ENCODE measurements at regions of chr15 and their contacts with region 1.

Region 1: DNA sequence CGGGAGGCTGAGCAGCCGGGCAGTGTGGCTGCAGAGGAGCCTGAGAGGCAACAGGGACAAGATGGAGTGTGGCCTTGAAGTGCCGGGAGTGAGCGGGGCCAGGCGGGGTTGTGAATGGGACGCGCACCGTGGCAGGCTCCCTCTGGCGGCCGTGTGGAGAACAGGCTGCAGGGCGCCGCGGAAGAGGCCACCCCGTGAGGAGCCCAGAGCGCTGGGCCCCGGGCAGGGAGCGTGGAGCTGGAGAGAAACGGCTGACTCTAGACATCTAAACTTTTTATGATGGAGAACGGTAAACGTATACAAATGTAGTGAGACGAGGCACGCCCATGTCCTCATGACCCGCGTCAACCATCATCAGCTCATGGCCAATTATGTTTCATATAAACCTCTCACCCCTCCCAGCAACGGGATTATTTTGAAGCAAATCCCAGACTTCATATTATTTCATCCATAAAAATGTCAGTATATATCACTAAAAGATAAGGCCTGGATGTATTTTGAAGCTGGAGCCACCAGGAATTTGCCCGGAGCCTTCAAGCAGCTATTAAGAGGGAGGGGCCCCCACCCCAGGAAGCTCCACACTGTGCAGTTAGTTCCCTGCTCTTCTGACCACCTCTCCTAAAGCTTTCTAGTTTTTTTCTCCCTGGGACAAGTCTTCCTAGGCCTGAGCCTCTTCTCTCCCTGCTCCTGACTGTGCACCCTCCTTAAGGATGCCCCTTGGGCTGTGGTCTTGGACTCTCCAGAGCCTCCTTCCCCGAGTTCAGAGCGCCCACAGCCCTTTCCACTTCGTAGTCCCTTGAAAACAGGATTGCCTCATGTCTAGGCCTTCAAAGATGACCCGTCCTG is 149.4 kb downstream of the SMAD6 start:
- DNase-seq: peak; percentile 89 to 96 (median 96)
- ATAC-seq: peak; percentile 83 to 88
- H3K4me3 ChIP-seq: no peak overlapping the region
- H3K27ac ChIP-seq: peak overlapping the region; percentile 53
- H3K4me1 ChIP-seq: peaks cover 14% of the 10 kb centered on the region
- H3K27me3 ChIP-seq: no peaks in the 10 kb centered on the region

Region 2: GRCh38 chr15:66603301-66604179 is 247.9 kb before region 1 on chr15:
- intact Hi-C with region 1: loop called (anchors 2 to 5 kb)
- DNase-seq: peak; percentile 75 to 93 (median 90)
- ATAC-seq: peak; percentile 89 to 90
- H3K4me3 ChIP-seq: no peak overlapping the region
- H3K27ac ChIP-seq: no peak overlapping the region
- H3K4me1 ChIP-seq: no peaks in the 10 kb centered on the region
- H3K27me3 ChIP-seq: no peaks in the 10 kb centered on the region

Region 3: DNA sequence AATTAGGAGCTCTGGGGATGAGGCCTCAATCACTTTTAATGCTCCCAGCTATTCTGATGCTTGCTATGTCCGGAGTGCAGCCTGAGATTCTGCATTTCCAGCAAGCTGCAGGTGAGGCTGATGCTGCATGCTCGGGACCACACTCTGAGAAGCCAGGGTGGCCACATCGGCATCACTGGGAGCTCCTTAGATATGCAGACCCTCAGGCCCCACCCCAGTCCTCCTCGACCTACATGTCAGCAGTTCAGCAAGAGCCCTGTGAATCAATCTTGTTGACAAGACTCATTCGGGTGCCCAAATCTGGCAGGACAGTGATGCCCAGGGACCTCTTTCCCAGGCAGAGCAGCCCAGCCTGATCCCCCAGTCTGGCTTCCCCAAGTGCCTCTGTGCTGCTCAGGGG is 241.6 kb before region 1 on chr15:
- intact Hi-C with region 1: loop called in 2 of 4 experiments (anchors 2 to 5 kb)
- DNase-seq: no peak
- ATAC-seq: no peak
- H3K4me3 ChIP-seq: no peak overlapping the region
- H3K27ac ChIP-seq: no peak overlapping the region
- H3K4me1 ChIP-seq: peaks cover 7% of the 10 kb centered on the region
- H3K27me3 ChIP-seq: no peaks in the 10 kb centered on the region

Region 4: DNA sequence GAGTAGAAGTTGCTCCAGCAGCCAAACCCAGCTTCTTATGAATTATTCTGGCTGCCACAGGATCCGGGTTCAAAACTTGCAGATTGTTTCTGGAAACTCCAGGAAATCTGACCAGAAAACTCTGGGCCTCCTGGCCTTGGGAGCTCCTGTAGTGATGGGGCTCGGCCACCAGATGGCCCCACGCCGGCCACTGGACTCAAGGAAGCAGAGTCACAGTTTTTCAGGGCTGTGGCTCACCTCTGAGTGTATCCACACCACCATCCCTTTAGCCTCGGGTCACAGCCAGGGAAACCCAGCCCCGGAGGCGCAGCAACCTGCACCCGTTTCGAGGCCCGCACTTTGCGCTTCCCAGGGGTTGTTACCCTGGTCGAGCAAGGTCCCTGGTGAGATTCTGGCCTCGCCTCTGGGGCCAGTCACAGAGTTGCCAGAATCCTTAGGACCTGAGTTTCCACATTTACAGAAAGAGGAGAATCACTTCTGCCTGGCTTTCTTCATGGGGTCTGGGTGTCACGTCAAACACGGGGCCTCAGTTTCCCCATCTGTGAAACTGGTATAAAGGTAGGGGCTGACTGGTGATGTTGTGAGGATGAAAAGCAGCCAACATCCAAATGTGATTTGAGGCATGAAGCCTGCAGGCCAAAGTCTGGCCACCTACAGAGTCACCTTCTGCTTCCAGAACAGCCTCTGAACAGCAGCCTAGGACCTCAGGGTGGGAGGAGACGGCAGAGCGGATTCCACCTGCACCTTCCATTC is 232.1 kb before region 1 on chr15:
- intact Hi-C with region 1: loop called in 1 of 4 experiments (anchors 5 kb)
- DNase-seq: peak; percentile 79 to 93 (median 93)
- ATAC-seq: peak; percentile 53
- H3K4me3 ChIP-seq: no peak overlapping the region
- H3K27ac ChIP-seq: peak overlapping the region; percentile 69
- H3K4me1 ChIP-seq: peaks cover 8% of the 10 kb centered on the region
- H3K27me3 ChIP-seq: no peaks in the 10 kb centered on the region

Region 5: DNA sequence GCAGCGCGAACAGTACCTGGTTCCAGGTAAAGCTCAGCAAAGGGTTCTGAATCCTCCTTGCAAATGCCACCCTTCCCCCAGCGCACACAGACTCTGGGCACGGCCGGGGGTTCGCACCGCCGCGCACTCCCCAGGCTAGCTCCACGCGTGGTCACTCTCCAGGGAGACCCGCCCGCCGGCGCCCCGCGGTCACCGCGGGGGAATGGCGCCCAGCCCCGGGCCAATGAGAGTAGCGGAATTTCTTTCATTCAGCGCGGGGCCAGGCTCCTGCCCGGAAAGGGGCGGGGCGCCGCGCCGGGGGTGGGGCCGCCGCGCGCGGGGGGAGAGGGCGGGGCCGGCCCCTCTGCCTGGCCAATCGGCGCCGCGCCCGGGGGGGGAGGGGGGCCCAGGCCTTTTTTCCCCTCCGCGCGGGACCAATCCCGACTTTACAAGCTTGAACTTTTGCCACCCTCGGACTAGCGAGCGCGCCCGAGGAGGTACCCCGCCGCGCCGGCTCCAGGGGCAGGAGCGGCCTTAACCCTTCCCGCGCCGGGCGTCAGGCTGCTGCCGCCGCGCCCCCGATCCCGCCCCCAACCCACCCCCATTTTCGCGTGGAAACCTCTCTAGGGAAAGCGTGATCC is 150.5 kb before region 1 on chr15:
- intact Hi-C with region 1: loop called (anchors 5 kb)
- DNase-seq: peak; percentile 97 to 99 (median 99)
- ATAC-seq: peak; percentile 76 to 78
- H3K4me3 ChIP-seq: peak overlapping the region; percentile 95
- H3K27ac ChIP-seq: peak overlapping the region; percentile 99
- H3K4me1 ChIP-seq: peaks cover 4% of the 10 kb centered on the region
- H3K27me3 ChIP-seq: no peaks in the 10 kb centered on the region

Region 6: DNA sequence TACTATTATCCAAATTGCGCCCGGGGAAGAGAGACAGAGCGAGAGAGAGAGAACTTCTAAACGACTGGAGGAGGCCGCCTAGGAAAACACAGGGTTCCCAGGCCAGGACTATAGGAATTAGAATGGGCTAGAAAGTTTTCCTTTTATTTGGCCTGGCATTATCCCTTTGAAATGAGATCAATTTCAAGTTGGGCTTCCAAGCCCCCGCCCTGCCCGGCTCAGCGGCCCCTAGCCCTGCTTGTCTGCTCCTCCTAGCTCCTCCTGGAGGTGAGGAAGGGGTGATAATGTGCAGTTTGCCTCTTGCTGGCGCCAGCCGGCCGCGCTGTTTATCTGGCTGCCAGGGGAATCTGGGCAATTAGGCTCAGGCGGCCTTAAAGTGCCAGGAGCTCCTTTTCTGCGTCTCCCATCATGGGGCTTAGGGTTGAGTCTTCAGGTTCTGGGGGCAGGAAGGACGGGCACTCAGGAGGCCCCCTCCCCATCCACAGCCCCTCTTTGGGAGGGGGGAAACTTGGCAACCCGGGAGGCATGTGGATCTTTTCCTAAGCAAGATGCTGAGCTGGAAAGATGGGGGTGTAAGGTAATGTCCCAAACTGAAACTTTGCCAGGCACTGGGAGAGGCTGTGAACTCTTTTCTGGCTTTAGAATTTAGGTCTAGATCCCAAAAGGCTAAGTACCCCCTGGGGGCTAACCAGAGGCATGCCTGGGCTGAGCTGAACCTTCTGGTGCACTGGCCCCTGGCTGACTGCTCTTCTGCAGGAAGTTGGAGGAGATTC is 144.0 kb before region 1 on chr15:
- intact Hi-C with region 1: loop called (anchors 5 kb)
- DNase-seq: peak; percentile 53 to 86 (median 82)
- ATAC-seq: peak; percentile 27 to 42
- H3K4me3 ChIP-seq: peak overlapping the region; percentile 95
- H3K27ac ChIP-seq: peak overlapping the region; percentile 77
- H3K4me1 ChIP-seq: peaks cover 18% of the 10 kb centered on the region
- H3K27me3 ChIP-seq: no peaks in the 10 kb centered on the region

Region 7: GRCh38 chr15:66740802-66741201 is 110.6 kb before region 1 on chr15:
- intact Hi-C with region 1: no loop called
- DNase-seq: peak; percentile 76 to 92 (median 91)
- ATAC-seq: peak; percentile 20 to 30
- H3K4me3 ChIP-seq: no peak overlapping the region
- H3K27ac ChIP-seq: peak overlapping the region; percentile 25
- H3K4me1 ChIP-seq: peaks cover 39% of the 10 kb centered on the region
- H3K27me3 ChIP-seq: no peaks in the 10 kb centered on the region

Region 8: GRCh38 chr15:66774001-66774814 is 77.2 kb before region 1 on chr15:
- intact Hi-C with region 1: loop called (anchors 5 to 10 kb)
- DNase-seq: peak; percentile 82 to 94 (median 94)
- ATAC-seq: peak; percentile 82 to 89
- H3K4me3 ChIP-seq: no peak overlapping the region
- H3K27ac ChIP-seq: peak overlapping the region; percentile 34
- H3K4me1 ChIP-seq: peaks cover 52% of the 10 kb centered on the region
- H3K27me3 ChIP-seq: no peaks in the 10 kb centered on the region

Measured in right cardiac atrium (tissue), 5 donors.